ENCODE measurements at regions of chr10 and their contacts with region 1.

Region 1: GRCh38 chr10:92240289-92241157 is 50.4 kb downstream of the CPEB3 start:
- DNase-seq: peak; percentile 61
- H3K4me3 ChIP-seq: peak overlapping the region; percentile 67 to 81 (median 74)
- H3K27ac ChIP-seq: peak overlapping the region; percentile 50
- H3K4me1 ChIP-seq: peaks cover 27% of the 10 kb centered on the region
- H3K27me3 ChIP-seq: no peaks in the 10 kb centered on the region
- CTCF ChIP-seq: no peak

Region 2: GRCh38 chr10:91709394-91709798 is 531.1 kb before region 1 on chr10:
- CTCF ChIA-PET with region 1: no interaction called
- dilution Hi-C with region 1: no loop called
- in situ Hi-C with region 1: no loop called
- intact Hi-C with region 1: no loop called
- DNase-seq: peak; percentile 53
- H3K4me3 ChIP-seq: no peak overlapping the region
- H3K27ac ChIP-seq: no peak overlapping the region
- H3K4me1 ChIP-seq: no peaks in the 10 kb centered on the region
- H3K27me3 ChIP-seq: peaks cover 5% of the 10 kb centered on the region
- CTCF ChIP-seq: no peak

Region 3: GRCh38 chr10:92087750-92088395 is 152.7 kb before region 1 on chr10:
- CTCF ChIA-PET with region 1: interaction called, 6 read pairs
- dilution Hi-C with region 1: no loop called
- in situ Hi-C with region 1: no loop called
- intact Hi-C with region 1: loop called (anchors 1 kb)
- DNase-seq: peak; percentile 75
- H3K4me3 ChIP-seq: no peak overlapping the region
- H3K27ac ChIP-seq: no peak overlapping the region
- H3K4me1 ChIP-seq: no peaks in the 10 kb centered on the region
- H3K27me3 ChIP-seq: no peaks in the 10 kb centered on the region
- CTCF ChIP-seq: peak; percentile 89 to 92

Region 4: GRCh38 chr10:92164036-92164696 is 76.4 kb before region 1 on chr10:
- CTCF ChIA-PET with region 1: no interaction called
- dilution Hi-C with region 1: loop called (anchors 5 kb)
- in situ Hi-C with region 1: no loop called
- intact Hi-C with region 1: no loop called
- DNase-seq: no peak
- H3K4me3 ChIP-seq: no peak overlapping the region
- H3K27ac ChIP-seq: no peak overlapping the region
- H3K4me1 ChIP-seq: no peaks in the 10 kb centered on the region
- H3K27me3 ChIP-seq: no peaks in the 10 kb centered on the region
- CTCF ChIP-seq: no peak

Region 5: DNA sequence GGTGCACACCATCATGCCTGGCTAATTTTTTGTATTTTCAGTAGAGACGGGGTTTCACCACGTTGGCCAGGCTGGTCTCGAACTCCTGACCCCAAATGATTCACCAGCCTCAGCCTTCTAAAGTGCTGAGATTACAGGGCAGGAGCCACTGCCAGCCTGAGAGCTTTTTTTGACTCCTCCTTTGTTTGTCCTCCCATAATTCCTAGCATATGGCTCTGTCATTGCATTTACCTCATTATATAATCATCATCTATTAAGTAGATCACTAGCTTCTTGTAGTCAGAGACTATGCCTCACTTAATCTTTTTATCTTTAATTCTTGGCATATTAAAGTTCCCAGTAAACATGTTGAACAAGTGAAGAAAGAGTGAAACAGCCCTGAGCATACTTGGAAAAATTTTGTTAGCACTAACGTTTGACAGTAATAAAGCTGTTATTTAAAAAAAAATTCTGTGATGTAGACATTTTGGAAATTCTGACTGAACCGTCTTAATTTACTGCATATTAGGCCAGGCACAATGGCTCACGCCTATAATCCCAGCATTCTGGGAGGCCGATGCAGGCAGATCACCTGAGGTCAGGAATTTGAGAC is 31.7 kb before region 1 on chr10:
- CTCF ChIA-PET with region 1: interaction called, 6 read pairs
- dilution Hi-C with region 1: no loop called
- in situ Hi-C with region 1: no loop called
- intact Hi-C with region 1: loop called (anchors 1 kb)
- DNase-seq: peak; percentile 61
- H3K4me3 ChIP-seq: no peak overlapping the region
- H3K27ac ChIP-seq: no peak overlapping the region
- H3K4me1 ChIP-seq: peaks cover 3% of the 10 kb centered on the region
- H3K27me3 ChIP-seq: no peaks in the 10 kb centered on the region
- CTCF ChIP-seq: no peak

Region 6: DNA sequence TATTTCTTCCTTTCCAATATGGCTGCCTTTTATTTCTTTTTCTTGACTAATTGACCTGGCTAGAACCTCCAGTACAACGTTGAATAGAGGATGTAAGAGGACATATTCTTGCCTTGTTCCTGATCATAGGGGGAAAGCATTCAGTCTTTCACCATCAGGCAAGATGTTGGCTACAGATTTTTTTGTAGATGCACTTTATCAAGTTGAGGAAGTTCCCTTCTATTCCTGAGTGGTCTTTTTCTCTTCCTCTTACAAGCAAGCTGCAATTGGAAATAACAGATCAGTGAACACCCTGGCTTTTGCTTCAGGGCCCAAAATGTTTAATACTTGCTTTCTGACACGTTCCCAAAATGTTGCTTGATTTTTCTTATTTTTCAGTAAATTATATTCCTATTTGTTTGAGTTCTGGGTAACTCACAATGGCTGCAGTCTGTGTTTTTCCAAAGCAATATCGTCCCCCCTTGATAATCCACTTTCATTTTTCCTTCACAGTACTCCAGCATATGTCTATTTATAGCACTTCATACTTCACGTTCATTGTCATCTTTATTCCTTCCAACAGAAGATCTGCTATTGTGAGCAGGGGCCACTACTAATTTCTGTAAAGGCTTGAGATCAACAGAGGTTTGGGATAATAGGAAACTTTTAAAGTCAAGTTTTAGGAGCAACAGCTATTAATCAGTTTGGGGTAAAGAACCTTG is 38.6 kb after region 1 on chr10:
- CTCF ChIA-PET with region 1: no interaction called
- dilution Hi-C with region 1: no loop called
- in situ Hi-C with region 1: no loop called
- intact Hi-C with region 1: no loop called
- DNase-seq: no peak
- H3K4me3 ChIP-seq: no peak overlapping the region
- H3K27ac ChIP-seq: no peak overlapping the region
- H3K4me1 ChIP-seq: no peaks in the 10 kb centered on the region
- H3K27me3 ChIP-seq: no peaks in the 10 kb centered on the region
- CTCF ChIP-seq: no peak

Region 7: DNA sequence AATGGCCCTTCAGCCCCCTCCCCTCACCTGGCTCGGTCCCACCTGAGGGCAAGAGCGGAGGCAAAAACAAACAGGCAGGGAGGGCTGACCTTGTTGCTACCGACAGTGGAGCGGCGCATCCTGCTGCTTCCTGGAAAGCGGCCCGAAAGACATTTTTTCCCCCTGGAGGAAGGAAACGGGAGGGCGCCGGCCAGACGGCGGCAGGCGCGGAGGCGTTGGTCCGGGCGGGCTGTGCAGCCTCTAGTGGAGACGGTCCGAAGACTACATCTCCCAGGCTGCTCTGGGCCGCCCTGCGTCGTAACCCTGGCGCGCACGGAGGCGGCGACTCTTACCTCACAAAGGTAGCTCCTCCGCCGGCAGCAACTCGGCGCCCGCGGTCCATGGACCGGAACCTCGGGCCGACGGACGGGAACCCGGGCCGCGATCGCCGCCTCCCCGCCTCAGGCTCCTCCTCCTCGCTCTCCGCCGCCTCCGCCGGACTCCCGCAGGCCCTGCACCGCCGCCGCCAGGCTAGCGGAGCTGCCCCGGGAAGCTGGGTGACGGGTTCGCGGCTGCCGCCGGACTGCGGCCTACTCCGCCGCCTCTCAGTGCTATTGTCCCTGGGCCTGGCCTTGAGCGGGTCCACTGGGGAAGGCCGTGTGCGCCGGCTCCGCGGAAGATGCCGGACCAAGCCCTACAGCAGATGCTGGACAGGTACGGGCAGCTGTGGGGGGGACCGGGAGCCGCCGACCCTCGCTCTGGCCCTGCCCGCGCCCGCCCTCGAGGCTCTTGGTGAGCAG is 50.5 kb after region 1 on chr10 and contains the starts of genes CPEB3 and MARCHF5:
- CTCF ChIA-PET with region 1: interaction called, 4 read pairs
- dilution Hi-C with region 1: loop called (anchors 5 kb)
- in situ Hi-C with region 1: no loop called
- intact Hi-C with region 1: loop called (anchors 1 kb)
- DNase-seq: peak; percentile 98
- H3K4me3 ChIP-seq: peak within 1 kb of the TSS; percentile 85 to 96 (median 94)
- H3K27ac ChIP-seq: peak within 1 kb of the TSS; percentile 76
- H3K4me1 ChIP-seq: peaks cover 6% of the 10 kb centered on the region
- H3K27me3 ChIP-seq: no peaks in the 10 kb centered on the region
- CTCF ChIP-seq: peak; percentile 49 to 81
- total RNA-seq, gene CPEB3: 1.2 to 1.5 TPM
- total RNA-seq, gene MARCHF5: 16.5 to 53.0 TPM